HepG2 (cell line): ENCODE measurements at regions of chr11 and their contacts with region 1.

Region 1: GRCh38 chr11:116879800-116880625 is 42.6 kb upstream of the APOA1 start:
- DNase-seq: peak; percentile 65
- ATAC-seq: peak; percentile 91
- H3K4me3 ChIP-seq: no peak overlapping the region
- H3K27ac ChIP-seq: no peak overlapping the region
- H3K4me1 ChIP-seq: no peaks in the 10 kb centered on the region
- H3K27me3 ChIP-seq: no peaks in the 10 kb centered on the region
- CTCF ChIP-seq: peak; percentile 81
- EP300 ChIP-seq: no peak
- POLR2A ChIP-seq: no peak
- RAD21 ChIP-seq: peak; percentile 67

Region 2: DNA sequence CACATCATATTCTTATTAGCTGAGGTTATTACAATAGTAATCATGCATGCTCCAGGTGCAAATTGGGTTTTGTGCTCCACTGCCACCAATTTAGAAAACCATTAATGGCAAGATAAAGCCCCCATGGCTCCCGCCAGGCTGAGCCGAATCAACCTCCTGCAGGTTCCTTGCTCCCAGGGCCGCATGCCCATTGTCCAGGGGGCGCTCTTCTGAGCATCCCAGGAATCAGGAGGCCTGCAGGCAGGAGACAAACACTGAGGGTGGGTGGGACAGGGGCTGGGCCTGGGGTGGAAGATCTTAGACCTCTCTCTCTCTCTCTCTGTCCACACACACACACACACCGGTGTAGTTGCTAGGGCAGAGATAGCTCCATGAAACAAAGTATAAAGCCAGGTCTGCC is 164.6 kb before region 1 on chr11:
- CTCF ChIA-PET with region 1: no interaction called
- POLR2A ChIA-PET with region 1: no interaction called
- in situ Hi-C with region 1: no loop called
- intact Hi-C with region 1: no loop called
- DNase-seq: no peak
- ATAC-seq: peak; percentile 64
- H3K4me3 ChIP-seq: no peak overlapping the region
- H3K27ac ChIP-seq: no peak overlapping the region
- H3K4me1 ChIP-seq: no peaks in the 10 kb centered on the region
- H3K27me3 ChIP-seq: peaks cover 4 to 35% of the 10 kb centered on the region in 2 experiments; a peak in 3 of 5 replicates
- CTCF ChIP-seq: peak; percentile 24; the same call in 1 of the 2 replicates
- EP300 ChIP-seq: no peak
- POLR2A ChIP-seq: no peak
- RAD21 ChIP-seq: no peak

Region 3: DNA sequence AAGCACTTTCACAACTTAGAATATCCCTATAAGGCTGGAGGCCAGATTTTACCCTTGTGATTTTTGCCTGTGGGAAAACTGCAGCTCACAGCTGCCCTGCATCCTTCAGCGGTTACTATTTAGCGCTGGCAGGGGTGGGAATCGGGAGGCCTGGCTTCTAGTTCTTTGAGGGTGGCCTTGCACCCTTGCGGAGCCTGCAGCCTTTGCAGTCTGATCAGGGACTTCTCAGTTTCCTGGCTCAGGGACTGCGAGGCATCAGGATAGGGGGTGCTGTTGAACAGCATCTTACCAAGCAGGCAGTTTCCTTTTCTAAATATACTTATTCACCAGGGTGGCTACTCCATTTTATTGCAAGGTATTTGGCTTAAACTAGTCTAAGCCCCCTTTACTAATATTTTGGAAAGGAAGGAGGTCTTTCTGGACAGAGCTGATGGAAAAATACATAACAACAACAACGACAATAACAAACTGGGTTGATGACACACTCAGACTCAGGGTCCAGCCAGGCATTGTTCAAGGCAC is 39.7 kb before region 1 on chr11:
- CTCF ChIA-PET with region 1: no interaction called
- POLR2A ChIA-PET with region 1: no interaction called
- in situ Hi-C with region 1: no loop called
- intact Hi-C with region 1: no loop called
- DNase-seq: peak; percentile 47
- ATAC-seq: peak; percentile 8
- H3K4me3 ChIP-seq: peak overlapping the region; percentile 38 to 67 (median 51); a peak in 5 of 6 replicates
- H3K27ac ChIP-seq: peak overlapping the region; percentile 85
- H3K4me1 ChIP-seq: peaks cover 75% of the 10 kb centered on the region
- H3K27me3 ChIP-seq: no peaks in the 10 kb centered on the region
- CTCF ChIP-seq: peak; percentile 56
- EP300 ChIP-seq: no peak
- POLR2A ChIP-seq: no peak
- RAD21 ChIP-seq: no peak

Region 4: GRCh38 chr11:116913000-116913399 is 33.0 kb after region 1 on chr11:
- CTCF ChIA-PET with region 1: no interaction called
- POLR2A ChIA-PET with region 1: no interaction called
- in situ Hi-C with region 1: no loop called
- intact Hi-C with region 1: no loop called
- DNase-seq: no peak
- ATAC-seq: no peak
- H3K4me3 ChIP-seq: no peak overlapping the region
- H3K27ac ChIP-seq: no peak overlapping the region
- H3K4me1 ChIP-seq: peaks cover 10% of the 10 kb centered on the region
- H3K27me3 ChIP-seq: no peaks in the 10 kb centered on the region
- CTCF ChIP-seq: no peak
- EP300 ChIP-seq: no peak
- POLR2A ChIP-seq: no peak
- RAD21 ChIP-seq: no peak

Region 5: DNA sequence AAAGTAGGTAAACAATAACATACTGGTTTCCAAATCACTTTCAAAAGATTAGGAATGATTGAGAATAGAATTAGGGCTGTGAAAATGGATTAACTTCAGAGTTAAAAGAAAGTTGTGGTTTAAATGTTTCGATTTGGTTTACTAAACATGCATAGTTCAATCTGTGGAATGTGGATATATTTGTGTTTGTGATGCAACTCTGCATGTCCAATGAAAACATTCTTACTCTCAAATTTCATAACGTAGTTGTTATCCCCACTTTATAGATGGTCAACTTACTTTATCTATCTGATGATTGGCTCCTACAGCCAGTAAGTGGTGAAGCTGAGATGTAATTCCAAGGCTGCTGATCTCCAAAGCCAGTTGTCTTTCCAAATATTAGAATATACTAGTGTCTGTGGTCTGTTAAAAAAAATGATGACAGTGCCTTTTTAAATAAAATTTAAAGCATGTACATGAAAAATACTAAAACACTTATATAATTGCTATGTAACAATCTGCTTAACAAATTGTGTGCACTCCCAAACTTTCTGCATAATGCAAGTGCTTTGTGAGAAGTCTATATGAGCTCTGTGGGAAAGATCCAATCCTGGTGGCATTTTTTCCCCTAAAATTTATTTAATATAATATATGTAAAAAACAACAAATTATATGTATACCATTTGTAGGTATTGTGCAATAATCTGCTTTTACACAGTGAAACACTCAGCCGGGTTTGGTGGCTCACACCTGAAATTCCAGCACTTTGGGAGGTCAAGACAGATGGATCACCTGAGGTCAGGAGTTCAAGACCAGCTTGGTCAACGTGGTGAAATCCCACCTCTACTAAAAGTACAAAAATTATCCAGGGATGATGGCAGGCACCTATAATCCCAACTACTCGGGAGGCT is 227.9 kb after region 1 on chr11:
- CTCF ChIA-PET with region 1: interaction called, 43 read pairs
- POLR2A ChIA-PET with region 1: no interaction called
- in situ Hi-C with region 1: no loop called
- intact Hi-C with region 1: loop called (anchors 1 kb)
- DNase-seq: no peak
- ATAC-seq: no peak
- H3K4me3 ChIP-seq: no peak overlapping the region; a peak in 1 of 6 replicates
- H3K27ac ChIP-seq: no peak overlapping the region
- H3K4me1 ChIP-seq: peaks cover 15% of the 10 kb centered on the region
- H3K27me3 ChIP-seq: no peaks in the 10 kb centered on the region
- CTCF ChIP-seq: no peak
- EP300 ChIP-seq: no peak
- POLR2A ChIP-seq: no peak
- RAD21 ChIP-seq: no peak